Vagina (tissue), 2 donors: ENCODE measurements at regions of chr6 and their contacts with region 1.

Region 1: DNA sequence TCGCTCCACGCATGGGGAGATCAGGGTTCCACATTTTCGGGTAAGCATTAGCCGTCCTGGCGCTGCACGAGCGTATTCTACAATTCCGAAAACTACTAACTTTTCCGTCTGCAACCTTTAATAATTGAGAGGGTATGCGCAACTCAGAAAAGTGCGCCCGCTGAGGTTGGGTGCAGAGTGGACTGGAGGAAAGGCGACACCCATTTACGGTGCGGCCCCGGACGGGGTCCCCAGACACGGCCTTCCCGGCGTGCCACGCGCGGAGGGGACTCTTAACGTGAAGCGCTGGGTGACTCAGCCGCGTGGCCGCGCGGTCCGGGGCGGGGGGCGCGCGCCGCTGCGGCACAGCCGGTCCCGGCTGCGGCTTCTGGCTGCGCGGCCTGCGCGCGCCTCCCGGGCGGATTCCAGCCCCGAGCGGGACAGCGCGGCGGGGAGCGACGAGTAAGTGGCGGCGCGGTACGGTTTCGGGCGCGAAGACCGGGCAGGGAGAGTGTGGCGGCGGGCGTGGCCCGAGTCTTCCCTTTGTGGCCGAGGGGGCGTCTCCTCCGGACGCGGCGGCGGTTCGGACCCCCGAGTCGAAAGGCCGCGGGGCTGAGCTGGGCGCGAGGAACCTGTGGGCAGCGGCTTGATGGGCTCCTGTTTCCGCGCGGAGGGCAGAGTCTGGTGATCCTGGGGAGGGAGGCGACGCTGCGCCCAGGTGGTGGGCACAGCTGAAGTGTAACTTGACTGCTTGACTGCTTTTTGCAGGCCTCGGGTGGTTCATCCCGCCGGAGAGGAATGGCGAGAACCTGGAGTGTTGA is at the starts of genes KCTD20 and PXT1:
- DNase-seq: peak in 1 of 2 donors; percentile 90
- H3K4me3 ChIP-seq: peak within 1 kb of the TSS; percentile 84 to 95
- H3K27ac ChIP-seq: peak within 1 kb of the TSS; percentile 99
- H3K4me1 ChIP-seq: peaks cover 39% of the 10 kb centered on the region
- H3K27me3 ChIP-seq: no peaks in the 10 kb centered on the region
- CTCF ChIP-seq: no peak
- POLR2A ChIP-seq: peak in 1 of 2 donors; percentile 82
- total RNA-seq, gene KCTD20: 30.0 TPM
- total RNA-seq, gene PXT1: not detected

Region 2: GRCh38 chr6:36326356-36326995 is 116.4 kb before region 1 on chr6:
- intact Hi-C with region 1: no loop called
- DNase-seq: no peak
- H3K4me3 ChIP-seq: no peak overlapping the region
- H3K27ac ChIP-seq: no peak overlapping the region
- H3K4me1 ChIP-seq: no peaks in the 10 kb centered on the region
- H3K27me3 ChIP-seq: no peaks in the 10 kb centered on the region
- CTCF ChIP-seq: no peak
- POLR2A ChIP-seq: no peak

Region 3: GRCh38 chr6:36504982-36505381 is 62.1 kb after region 1 on chr6:
- intact Hi-C with region 1: no loop called
- DNase-seq: no peak
- H3K4me3 ChIP-seq: no peak overlapping the region
- H3K27ac ChIP-seq: no peak overlapping the region
- H3K4me1 ChIP-seq: no peaks in the 10 kb centered on the region
- H3K27me3 ChIP-seq: no peaks in the 10 kb centered on the region
- CTCF ChIP-seq: no peak
- POLR2A ChIP-seq: no peak

Region 4: DNA sequence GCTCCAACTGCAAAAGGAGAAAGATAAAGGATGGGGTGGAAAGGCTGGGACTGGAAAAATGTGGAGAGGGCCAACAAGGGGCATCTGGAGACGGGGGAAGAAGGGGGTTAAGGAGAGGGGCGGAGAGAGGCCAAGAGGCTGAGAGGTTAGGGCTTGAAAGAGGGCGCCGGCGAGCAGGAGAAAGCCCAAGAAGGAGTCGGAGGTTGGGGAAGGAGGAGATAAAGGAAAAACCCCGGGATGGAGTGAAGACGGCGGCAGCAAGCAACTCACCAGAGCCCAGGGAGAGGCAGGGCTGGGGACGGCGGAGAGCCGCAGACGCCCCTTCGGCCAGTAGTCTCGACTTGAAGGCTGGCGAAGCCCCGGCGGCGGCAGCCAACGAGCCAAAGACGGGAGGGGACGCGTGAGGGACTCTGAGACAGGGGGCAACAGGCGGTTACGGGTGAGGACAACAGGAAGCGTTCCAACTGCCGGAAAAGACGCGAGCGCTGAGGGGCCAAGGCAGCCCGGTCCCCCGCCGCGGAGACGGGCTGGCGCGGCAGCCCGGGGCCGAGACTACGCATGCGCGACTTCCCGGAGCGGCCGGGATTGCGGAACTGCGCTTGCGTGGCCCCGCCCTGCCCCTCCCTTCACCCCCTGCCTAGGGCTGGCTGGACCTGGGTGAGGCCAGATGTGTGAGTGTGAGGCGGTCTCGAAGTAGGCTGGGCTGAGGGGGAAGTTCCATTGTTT is 104.2 kb after region 1 on chr6 and contains the start of gene STK38:
- intact Hi-C with region 1: loop called (anchors 10 kb)
- DNase-seq: peak; percentile 95 to 97
- H3K4me3 ChIP-seq: peak within 1 kb of the TSS; percentile 86 to 93
- H3K27ac ChIP-seq: peak within 1 kb of the TSS; percentile 99
- H3K4me1 ChIP-seq: peaks cover 36% of the 10 kb centered on the region
- H3K27me3 ChIP-seq: no peaks in the 10 kb centered on the region
- CTCF ChIP-seq: no peak
- POLR2A ChIP-seq: peak; percentile 90 to 98
- total RNA-seq, gene STK38: 31.9 TPM